ENCODE measurements at regions of chr16 and their contacts with region 1.

Region 1: DNA sequence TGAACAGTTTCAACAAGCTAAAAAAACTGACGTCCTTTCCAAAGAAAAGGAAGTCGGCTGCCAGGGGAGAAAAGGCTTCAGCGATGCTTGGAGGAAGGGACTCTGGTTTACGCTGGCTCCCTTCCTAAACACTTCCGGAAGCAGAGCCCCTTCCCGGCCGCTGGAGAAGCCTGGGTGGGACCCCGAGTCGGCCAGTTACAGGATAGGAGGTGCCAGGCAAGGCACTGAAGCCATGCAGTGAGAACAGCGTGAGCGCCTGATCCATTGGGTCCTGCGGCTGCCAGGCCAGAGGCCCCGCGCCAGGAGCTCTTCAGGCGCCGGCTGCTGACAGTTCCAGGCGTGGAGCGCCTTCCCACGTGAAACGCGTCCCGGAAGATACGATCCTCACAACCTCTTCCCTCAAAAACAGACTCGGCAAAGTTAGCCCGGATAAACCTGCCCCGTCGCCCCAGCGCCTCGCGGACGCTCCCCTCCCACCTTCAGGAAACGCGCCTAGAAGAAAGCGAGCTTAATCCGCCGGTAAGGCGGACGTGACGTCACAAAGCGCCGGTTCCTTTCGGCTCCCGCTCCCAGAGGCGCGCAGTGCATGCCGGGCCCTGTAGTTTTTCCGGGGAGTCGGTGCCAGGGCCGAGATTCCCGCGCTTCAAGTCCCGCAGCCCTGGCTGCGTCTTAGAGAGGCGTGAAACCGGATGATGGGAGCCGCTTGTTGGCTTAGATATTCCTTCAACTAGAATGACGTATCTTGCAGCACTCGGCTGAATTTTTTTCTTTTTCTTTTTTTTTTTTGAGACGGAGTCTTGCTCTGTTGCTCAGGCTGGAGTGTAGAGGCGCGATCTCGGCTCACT is at the start of gene ADAT1:
- DNase-seq: peak; percentile 98
- H3K4me3 ChIP-seq: peak within 1 kb of the TSS; percentile 70 to 75
- H3K27ac ChIP-seq: peak within 1 kb of the TSS; percentile 74 to 85
- H3K4me1 ChIP-seq: peaks cover 6% of the 10 kb centered on the region
- H3K27me3 ChIP-seq: no peaks in the 10 kb centered on the region
- CTCF ChIP-seq: peak in 2 of 4 experiments; percentile 18 to 28
- POLR2A ChIP-seq: peak; percentile 89
- total RNA-seq, gene ADAT1: 49.1 to 66.0 TPM

Region 2: DNA sequence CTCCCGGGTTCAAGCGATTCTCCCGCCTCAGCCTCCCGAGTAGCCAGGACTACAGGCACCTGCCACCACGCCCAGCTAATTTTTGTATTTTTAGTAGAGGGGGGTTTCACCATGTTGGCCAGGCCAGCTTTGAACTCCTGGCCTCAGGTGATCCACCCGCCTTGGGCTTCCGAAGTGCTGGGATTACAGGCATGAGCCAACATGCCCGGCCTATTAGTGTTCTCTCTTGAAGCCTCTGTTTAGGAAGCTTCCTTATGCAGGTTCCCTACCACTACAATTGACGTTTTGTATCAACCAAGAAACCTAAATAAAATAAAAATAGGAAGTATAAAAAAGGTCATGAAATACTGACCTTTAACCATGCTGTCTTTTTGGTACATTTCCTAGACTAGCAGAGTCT is 103.1 kb before region 1 on chr16:
- intact Hi-C with region 1: loop called (anchors 10 kb)
- DNase-seq: no peak
- H3K4me3 ChIP-seq: no peak overlapping the region
- H3K27ac ChIP-seq: no peak overlapping the region
- H3K4me1 ChIP-seq: no peaks in the 10 kb centered on the region
- H3K27me3 ChIP-seq: no peaks in the 10 kb centered on the region
- CTCF ChIP-seq: no peak
- POLR2A ChIP-seq: no peak

Region 3: GRCh38 chr16:76598498-76598897 is 975.5 kb after region 1 on chr16:
- intact Hi-C with region 1: no loop called
- DNase-seq: no peak
- H3K4me3 ChIP-seq: no peak overlapping the region
- H3K27ac ChIP-seq: no peak overlapping the region
- H3K4me1 ChIP-seq: no peaks in the 10 kb centered on the region
- H3K27me3 ChIP-seq: no peaks in the 10 kb centered on the region
- CTCF ChIP-seq: no peak
- POLR2A ChIP-seq: no peak

Measured in prostate gland (tissue), 2 donors.